ENCODE measurements at regions of chr2 and their contacts with region 1.

Region 1: GRCh38 chr2:126482582-126483464 is 173.1 kb upstream of the GYPC start:
- DNase-seq: peak; percentile 43
- ATAC-seq: peak; percentile 99
- H3K4me3 ChIP-seq: no peak overlapping the region
- H3K27ac ChIP-seq: no peak overlapping the region
- H3K4me1 ChIP-seq: no peaks in the 10 kb centered on the region
- H3K27me3 ChIP-seq: no peaks in the 10 kb centered on the region; a peak in 1 of 5 replicates
- CTCF ChIP-seq: peak; percentile 71
- EP300 ChIP-seq: no peak
- POLR2A ChIP-seq: no peak
- RAD21 ChIP-seq: no peak

Region 2: DNA sequence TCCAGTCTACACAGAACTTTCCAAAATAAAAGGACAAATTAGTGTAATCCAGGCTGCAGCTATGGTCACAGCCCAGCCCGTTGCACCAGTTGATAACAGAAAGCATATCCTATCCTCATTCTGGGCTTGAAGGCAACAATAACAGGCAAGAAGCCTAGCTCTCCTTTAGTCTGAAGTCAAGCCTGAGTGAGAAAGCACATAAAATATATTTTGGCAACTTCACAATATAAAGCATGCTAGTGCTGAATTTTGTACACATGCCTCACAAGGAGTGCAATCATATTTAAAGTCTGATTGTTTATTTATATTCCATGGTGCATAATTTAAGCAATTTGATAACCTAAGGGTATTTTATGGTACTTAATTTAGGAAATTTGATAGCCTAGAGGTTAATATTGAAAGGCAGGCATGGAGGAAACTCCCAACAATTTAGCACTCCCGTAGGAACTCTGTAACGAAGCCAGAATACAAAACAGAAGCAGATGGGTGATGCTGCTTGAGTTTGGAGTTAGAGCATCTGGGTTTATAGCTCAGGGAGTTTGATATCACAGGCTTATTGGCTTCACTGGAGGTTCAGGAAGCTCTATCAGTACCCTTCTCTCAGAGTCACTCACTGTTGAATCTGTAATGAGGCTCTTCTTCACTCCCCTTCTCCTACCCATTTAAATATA is 1026.0 kb before region 1 on chr2:
- CTCF ChIA-PET with region 1: no interaction called
- POLR2A ChIA-PET with region 1: no interaction called
- in situ Hi-C with region 1: no loop called
- intact Hi-C with region 1: no loop called
- DNase-seq: no peak
- ATAC-seq: no peak
- H3K4me3 ChIP-seq: no peak overlapping the region
- H3K27ac ChIP-seq: no peak overlapping the region
- H3K4me1 ChIP-seq: no peaks in the 10 kb centered on the region
- H3K27me3 ChIP-seq: no peaks in the 10 kb centered on the region
- CTCF ChIP-seq: no peak
- EP300 ChIP-seq: no peak
- POLR2A ChIP-seq: no peak
- RAD21 ChIP-seq: no peak

Region 3: GRCh38 chr2:126244937-126245336 is 237.9 kb before region 1 on chr2:
- CTCF ChIA-PET with region 1: no interaction called
- POLR2A ChIA-PET with region 1: no interaction called
- in situ Hi-C with region 1: no loop called
- intact Hi-C with region 1: loop called (anchors 1 kb)
- DNase-seq: peak; percentile 61
- ATAC-seq: peak; percentile 96
- H3K4me3 ChIP-seq: no peak overlapping the region
- H3K27ac ChIP-seq: no peak overlapping the region
- H3K4me1 ChIP-seq: no peaks in the 10 kb centered on the region
- H3K27me3 ChIP-seq: no peaks in the 10 kb centered on the region
- CTCF ChIP-seq: peak; percentile 75
- EP300 ChIP-seq: no peak
- POLR2A ChIP-seq: no peak
- RAD21 ChIP-seq: peak; percentile 68

Region 4: DNA sequence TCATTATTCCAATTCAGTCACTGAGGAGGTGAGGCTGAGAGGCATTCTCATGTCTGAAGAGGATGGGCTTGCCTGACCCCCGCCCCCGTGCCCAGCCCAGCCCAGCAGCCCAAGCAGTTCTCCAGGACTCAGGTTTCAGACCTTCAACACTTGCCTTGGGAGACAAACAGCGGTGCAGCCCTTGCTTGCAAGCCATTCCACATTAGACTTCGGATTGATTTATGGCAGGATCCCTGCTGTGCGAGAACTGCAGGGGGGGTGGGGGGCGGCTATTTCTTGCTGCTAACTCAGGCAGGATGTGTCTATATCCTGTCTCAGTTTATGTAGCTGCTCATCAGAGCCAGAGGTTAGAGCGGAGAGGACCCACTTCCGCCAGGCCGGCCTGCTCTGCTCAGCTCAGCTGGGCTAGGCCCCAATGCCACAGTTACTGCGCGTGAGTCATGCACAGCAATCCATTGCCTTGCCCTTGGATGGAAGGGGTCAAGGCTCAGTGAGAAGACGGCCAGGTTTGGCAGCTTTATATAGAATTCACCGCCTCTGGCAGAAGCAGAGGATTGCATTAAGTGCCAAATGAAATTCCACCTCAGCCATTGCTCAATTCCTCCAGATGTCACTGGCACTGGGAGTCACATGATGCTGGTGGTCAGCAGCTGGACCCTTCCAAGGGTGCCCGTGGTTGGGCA is 175.0 kb after region 1 on chr2:
- CTCF ChIA-PET with region 1: no interaction called
- POLR2A ChIA-PET with region 1: no interaction called
- in situ Hi-C with region 1: no loop called
- intact Hi-C with region 1: no loop called
- DNase-seq: no peak
- ATAC-seq: peak; percentile 27; the same call in 2 of the 3 replicates
- H3K4me3 ChIP-seq: no peak overlapping the region
- H3K27ac ChIP-seq: no peak overlapping the region
- H3K4me1 ChIP-seq: no peaks in the 10 kb centered on the region
- H3K27me3 ChIP-seq: peaks cover 6 to 58% of the 10 kb centered on the region in 2 experiments
- CTCF ChIP-seq: no peak
- EP300 ChIP-seq: no peak
- POLR2A ChIP-seq: no peak
- RAD21 ChIP-seq: no peak